Breast epithelium (tissue), 4 donors: ENCODE measurements at regions of chr13 and their contacts with region 1.

Region 1: DNA sequence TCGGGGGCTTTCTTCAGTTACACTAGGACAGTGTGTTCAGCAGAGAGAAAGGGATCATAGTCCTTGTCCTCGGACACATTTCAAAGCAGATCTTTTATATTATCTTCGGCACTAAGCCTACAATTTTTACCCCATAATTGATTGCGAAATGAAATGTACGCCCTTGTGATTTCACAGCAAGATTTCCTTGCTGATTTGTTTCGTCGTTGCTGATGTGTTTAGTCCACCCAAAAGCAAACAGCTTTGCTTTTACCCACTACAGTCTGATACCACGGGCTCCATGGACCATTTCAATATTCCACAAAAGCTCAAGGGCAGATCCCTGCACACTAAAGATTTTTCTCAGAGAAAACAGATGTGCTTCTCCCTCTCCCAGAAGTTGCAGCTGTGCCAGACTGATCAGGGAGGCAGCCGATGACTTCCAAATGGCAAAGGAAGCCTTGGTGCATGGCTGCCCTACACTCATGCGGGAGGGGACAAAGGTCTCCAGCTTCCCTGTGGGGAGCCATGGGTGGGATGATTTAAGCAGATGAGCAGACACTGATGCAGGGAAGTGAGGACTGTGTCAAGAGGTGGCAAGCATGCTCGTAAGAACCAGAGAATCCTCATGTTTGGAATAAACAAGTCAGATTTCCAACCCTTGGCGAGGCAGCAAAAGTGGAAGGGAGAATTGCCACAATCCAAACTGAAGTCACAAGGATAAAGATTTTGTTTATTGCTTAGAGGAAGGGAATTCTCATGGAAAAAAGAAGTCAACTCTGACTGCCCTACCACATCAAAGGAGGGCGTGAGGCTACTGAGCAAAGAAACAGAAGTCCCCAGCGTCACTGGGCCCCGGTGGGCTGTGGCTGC is 81.1 kb downstream of the STK24 start:
- DNase-seq: no peak
- H3K4me3 ChIP-seq: peak overlapping the region in 2 of 3 donors; percentile 15 to 50
- H3K27ac ChIP-seq: peak overlapping the region; percentile 43 to 88
- H3K4me1 ChIP-seq: peaks cover 6 to 23% of the 10 kb centered on the region in 2 donors
- H3K27me3 ChIP-seq: no peaks in the 10 kb centered on the region
- CTCF ChIP-seq: no peak
- POLR2A ChIP-seq: no peak

Region 2: DNA sequence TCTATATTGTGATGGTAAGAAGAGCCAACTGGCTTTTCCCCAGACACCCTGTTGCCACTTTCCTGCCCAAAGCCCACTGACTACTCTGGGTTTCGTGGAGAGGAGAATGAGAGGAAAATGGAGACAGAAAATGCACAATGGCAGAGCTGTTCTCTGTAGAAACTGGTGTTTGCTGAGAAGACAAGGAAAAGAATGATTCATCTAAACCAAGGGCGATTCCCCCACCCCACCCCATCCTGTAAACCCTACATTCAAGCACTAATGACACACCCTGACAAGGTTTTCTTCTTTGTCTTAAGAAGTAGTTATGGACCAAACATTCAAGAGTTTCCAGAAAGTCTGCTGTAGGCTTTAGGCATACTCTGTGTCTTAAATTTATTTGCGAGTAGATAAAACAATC is 413.2 kb after region 1 on chr13:
- intact Hi-C with region 1: loop called (anchors 5 kb)
- DNase-seq: no peak
- H3K4me3 ChIP-seq: no peak overlapping the region
- H3K27ac ChIP-seq: peak overlapping the region in 1 of 2 donors; percentile 67
- H3K4me1 ChIP-seq: no peaks in the 10 kb centered on the region
- H3K27me3 ChIP-seq: no peaks in the 10 kb centered on the region
- CTCF ChIP-seq: no peak
- POLR2A ChIP-seq: no peak